RWPE1 (cell line): ENCODE measurements at regions of chr20 and their contacts with region 1.

Region 1: GRCh38 chr20:39112178-39112743 is 150.1 kb downstream of the DHX35 start:
- DNase-seq: peak; percentile 93
- H3K27ac ChIP-seq: no peak overlapping the region
- CTCF ChIP-seq: peak; percentile 83

Region 2: GRCh38 chr20:38941726-38942389 is 170.4 kb before region 1 on chr20:
- CTCF ChIA-PET with region 1: interaction called, 3 read pairs
- POLR2A ChIA-PET with region 1: interaction called, 11 read pairs
- DNase-seq: no peak
- H3K27ac ChIP-seq: no peak overlapping the region
- CTCF ChIP-seq: no peak